PC-9 (cell line): ENCODE measurements at regions of chrX and their contacts with region 1.

Region 1: DNA sequence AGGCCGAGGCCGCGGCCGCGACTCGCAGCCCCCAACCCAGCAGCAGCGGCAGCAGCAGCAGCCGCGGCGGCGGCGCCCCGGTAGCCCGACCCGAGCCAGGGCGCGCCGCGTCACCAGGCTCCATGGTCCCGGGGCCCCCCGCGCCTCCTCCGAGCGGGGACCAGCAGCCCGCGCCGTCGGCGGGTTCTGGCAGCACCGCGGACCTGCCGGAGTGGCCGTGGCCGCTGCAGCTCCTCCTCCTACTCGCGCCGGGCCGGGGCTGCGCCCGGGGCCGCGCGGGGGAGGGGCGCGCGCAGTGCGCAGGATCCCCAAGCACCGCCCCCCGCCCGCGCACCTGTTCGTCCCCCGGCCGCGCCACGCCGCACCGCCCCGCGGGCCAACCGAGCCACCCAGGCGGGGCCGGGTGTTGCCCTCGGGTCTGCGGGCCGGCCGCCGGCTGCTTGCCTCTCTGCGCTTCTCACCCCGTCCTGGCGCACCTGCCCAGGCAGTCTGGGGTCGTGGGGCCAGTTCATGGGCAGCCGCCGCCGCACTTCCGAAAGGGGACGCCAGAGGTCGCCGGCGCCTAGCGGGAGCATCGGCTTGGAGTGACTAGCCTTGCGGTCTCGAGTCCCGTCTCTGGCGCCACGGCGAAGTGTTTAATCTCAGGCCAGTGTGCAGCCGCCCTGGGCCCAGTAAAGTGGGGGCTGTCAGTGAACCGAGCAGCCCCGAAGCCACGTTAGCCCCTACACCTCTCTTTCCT is at the start of gene SLC9A7:
- DNase-seq: peak; percentile 54 to 76
- H3K4me3 ChIP-seq: peak within 1 kb of the TSS; percentile 56
- H3K27ac ChIP-seq: peak within 1 kb of the TSS; percentile 66
- H3K4me1 ChIP-seq: peaks cover 11% of the 10 kb centered on the region
- H3K27me3 ChIP-seq: no peaks in the 10 kb centered on the region
- CTCF ChIP-seq: peak; percentile 71
- total RNA-seq, gene SLC9A7: 20.2 and 20.9 TPM in 2 replicates

Region 2: GRCh38 chrX:45781901-45782553 is 977.0 kb before region 1 on chrX:
- CTCF ChIA-PET with region 1: no interaction called
- POLR2A ChIA-PET with region 1: no interaction called
- intact Hi-C with region 1: no loop called
- DNase-seq: peak in 1 of 2 experiments; percentile 37
- H3K4me3 ChIP-seq: no peak overlapping the region
- H3K27ac ChIP-seq: peak overlapping the region; percentile 34; the same call in 1 of the 2 replicates
- H3K4me1 ChIP-seq: peaks cover 26% of the 10 kb centered on the region
- H3K27me3 ChIP-seq: no peaks in the 10 kb centered on the region
- CTCF ChIP-seq: no peak

Region 3: GRCh38 chrX:46686003-46686645 is 73.0 kb before region 1 on chrX:
- CTCF ChIA-PET with region 1: no interaction called
- POLR2A ChIA-PET with region 1: no interaction called
- intact Hi-C with region 1: loop called (anchors 10 kb)
- DNase-seq: no peak
- H3K4me3 ChIP-seq: no peak overlapping the region
- H3K27ac ChIP-seq: no peak overlapping the region
- H3K4me1 ChIP-seq: peaks cover 3% of the 10 kb centered on the region; the same call in 1 of the 2 replicates
- H3K27me3 ChIP-seq: no peaks in the 10 kb centered on the region
- CTCF ChIP-seq: peak; percentile 46

Region 4: GRCh38 chrX:46796574-46797191 is 37.6 kb after region 1 on chrX:
- CTCF ChIA-PET with region 1: interaction called, 4 read pairs
- POLR2A ChIA-PET with region 1: no interaction called
- intact Hi-C with region 1: loop called (anchors 1 kb)
- DNase-seq: peak; percentile 45 to 50
- H3K4me3 ChIP-seq: no peak overlapping the region
- H3K27ac ChIP-seq: no peak overlapping the region
- H3K4me1 ChIP-seq: peaks cover 19% of the 10 kb centered on the region
- H3K27me3 ChIP-seq: no peaks in the 10 kb centered on the region
- CTCF ChIP-seq: peak; percentile 68

Region 5: GRCh38 chrX:46836701-46837557 is 77.9 kb after region 1 on chrX and contains the start of gene RP2:
- CTCF ChIA-PET with region 1: no interaction called
- POLR2A ChIA-PET with region 1: no interaction called
- intact Hi-C with region 1: loop called (anchors 2 kb)
- DNase-seq: peak; percentile 81 to 83
- H3K4me3 ChIP-seq: peak within 1 kb of the TSS; percentile 65
- H3K27ac ChIP-seq: peak within 1 kb of the TSS; percentile 68
- H3K4me1 ChIP-seq: no peaks in the 10 kb centered on the region; the same call in 1 of the 2 replicates
- H3K27me3 ChIP-seq: no peaks in the 10 kb centered on the region
- CTCF ChIP-seq: no peak
- total RNA-seq, gene RP2: 7.8 and 11.2 TPM in 2 replicates

Region 6: GRCh38 chrX:47030339-47030738 is 271.3 kb after region 1 on chrX:
- CTCF ChIA-PET with region 1: no interaction called
- POLR2A ChIA-PET with region 1: no interaction called
- intact Hi-C with region 1: loop called (anchors 5 kb)
- DNase-seq: peak in 1 of 2 experiments; percentile 49
- H3K4me3 ChIP-seq: no peak overlapping the region
- H3K27ac ChIP-seq: no peak overlapping the region
- H3K4me1 ChIP-seq: no peaks in the 10 kb centered on the region
- H3K27me3 ChIP-seq: no peaks in the 10 kb centered on the region
- CTCF ChIP-seq: peak; percentile 61